GM13976 (cell line): ENCODE measurements at regions of chr17 and their contacts with region 1.

Region 1: GRCh38 chr17:72556944-72557826 is 436.4 kb downstream of the SOX9 start:
- DNase-seq: peak; percentile 86
- CTCF ChIP-seq: peak; percentile 73

Region 2: GRCh38 chr17:72985881-72986720 is 428.9 kb after region 1 on chr17:
- in situ Hi-C with region 1: loop called (anchors 25 kb)
- DNase-seq: peak; percentile 87
- CTCF ChIP-seq: peak; percentile 84

Region 3: GRCh38 chr17:73192894-73193701 is 635.9 kb after region 1 on chr17 and contains the start of gene COG1:
- in situ Hi-C with region 1: loop called (anchors 25 kb)
- DNase-seq: peak; percentile 97
- CTCF ChIP-seq: no peak

Region 4: GRCh38 chr17:73359987-73360410 is 802.8 kb after region 1 on chr17:
- in situ Hi-C with region 1: loop called (anchors 25 kb)
- DNase-seq: no peak
- CTCF ChIP-seq: no peak